ENCODE measurements at regions of chr17 and their contacts with region 1.

Region 1: GRCh38 chr17:50087246-50087911 is 7.8 kb upstream of the PDK2 start:
- DNase-seq: no peak
- H3K4me3 ChIP-seq: no peak overlapping the region
- H3K27me3 ChIP-seq: no peaks in the 10 kb centered on the region
- CTCF ChIP-seq: peak; percentile 98

Region 2: DNA sequence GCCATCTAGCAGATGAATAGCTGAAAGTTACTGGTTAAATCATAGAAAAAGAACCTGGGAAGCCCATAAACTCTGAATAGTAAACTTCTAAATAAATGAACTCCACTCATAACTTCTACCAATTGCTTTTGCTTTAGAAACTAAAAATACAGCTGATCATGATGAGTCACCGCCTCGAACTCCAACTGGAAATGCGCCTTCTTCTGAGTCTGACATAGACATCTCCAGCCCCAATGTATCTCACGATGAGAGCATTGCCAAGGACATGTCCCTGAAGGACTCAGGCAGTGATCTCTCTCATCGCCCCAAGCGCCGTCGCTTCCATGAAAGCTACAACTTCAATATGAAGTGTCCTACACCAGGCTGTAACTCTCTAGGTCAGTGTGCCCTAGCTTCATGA is 289.2 kb before region 1 on chr17:
- CTCF ChIA-PET with region 1: no interaction called
- POLR2A ChIA-PET with region 1: no interaction called
- DNase-seq: no peak
- H3K4me3 ChIP-seq: no peak overlapping the region
- H3K27me3 ChIP-seq: no peaks in the 10 kb centered on the region
- CTCF ChIP-seq: no peak

Region 3: GRCh38 chr17:49969134-49969759 is 118.1 kb before region 1 on chr17 and contains the start of gene DLX4:
- CTCF ChIA-PET with region 1: no interaction called
- POLR2A ChIA-PET with region 1: no interaction called
- DNase-seq: no peak
- H3K4me3 ChIP-seq: peak within 1 kb of the TSS; percentile 39
- H3K27me3 ChIP-seq: peaks cover 76% of the 10 kb centered on the region
- CTCF ChIP-seq: no peak
- polyA plus RNA-seq, gene DLX4: 0.18 and 0.29 TPM in 2 replicates

Region 4: DNA sequence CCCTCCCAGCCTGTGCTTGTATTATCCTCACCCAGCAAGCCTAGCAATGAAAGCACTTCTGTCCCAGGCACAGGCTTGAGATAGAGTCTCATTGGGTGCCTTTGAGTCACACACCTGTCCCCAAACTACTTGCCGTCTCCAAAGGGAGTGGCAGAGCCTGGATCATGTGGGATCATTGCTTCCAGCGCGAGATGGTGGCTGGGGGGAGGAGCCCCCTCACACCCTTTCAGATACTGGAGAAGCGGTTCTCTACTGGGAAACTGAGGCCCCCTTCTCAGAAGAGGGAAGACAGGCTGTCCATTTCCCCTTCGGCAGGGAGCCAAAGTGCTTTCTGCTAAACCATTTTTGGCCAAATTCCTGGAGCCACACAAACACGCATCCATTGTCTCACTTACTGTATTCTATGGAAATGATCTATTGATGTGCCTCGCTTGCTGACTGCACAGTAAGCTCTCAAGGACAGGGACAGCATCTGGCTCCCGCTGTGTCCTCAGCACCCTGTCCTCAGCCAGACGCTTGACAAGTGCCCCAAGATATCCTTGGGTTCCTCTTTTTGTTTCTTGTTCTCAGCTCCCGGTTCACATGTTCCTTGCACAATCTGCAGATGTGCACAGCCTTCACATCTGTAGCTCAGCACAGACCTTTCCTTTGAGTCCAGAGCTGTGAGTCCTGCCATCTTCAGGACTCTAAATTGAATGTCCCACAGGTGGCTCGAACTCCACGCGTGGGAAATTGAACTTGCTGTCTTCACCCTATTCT is 66.4 kb before region 1 on chr17:
- CTCF ChIA-PET with region 1: interaction called, 102 read pairs
- POLR2A ChIA-PET with region 1: no interaction called
- DNase-seq: no peak
- H3K4me3 ChIP-seq: no peak overlapping the region
- H3K27me3 ChIP-seq: no peaks in the 10 kb centered on the region
- CTCF ChIP-seq: no peak

Region 5: GRCh38 chr17:50033316-50033715 is 54.1 kb before region 1 on chr17:
- CTCF ChIA-PET with region 1: interaction called, 102 read pairs
- POLR2A ChIA-PET with region 1: no interaction called
- DNase-seq: no peak
- H3K4me3 ChIP-seq: no peak overlapping the region
- H3K27me3 ChIP-seq: no peaks in the 10 kb centered on the region
- CTCF ChIP-seq: no peak

Region 6: DNA sequence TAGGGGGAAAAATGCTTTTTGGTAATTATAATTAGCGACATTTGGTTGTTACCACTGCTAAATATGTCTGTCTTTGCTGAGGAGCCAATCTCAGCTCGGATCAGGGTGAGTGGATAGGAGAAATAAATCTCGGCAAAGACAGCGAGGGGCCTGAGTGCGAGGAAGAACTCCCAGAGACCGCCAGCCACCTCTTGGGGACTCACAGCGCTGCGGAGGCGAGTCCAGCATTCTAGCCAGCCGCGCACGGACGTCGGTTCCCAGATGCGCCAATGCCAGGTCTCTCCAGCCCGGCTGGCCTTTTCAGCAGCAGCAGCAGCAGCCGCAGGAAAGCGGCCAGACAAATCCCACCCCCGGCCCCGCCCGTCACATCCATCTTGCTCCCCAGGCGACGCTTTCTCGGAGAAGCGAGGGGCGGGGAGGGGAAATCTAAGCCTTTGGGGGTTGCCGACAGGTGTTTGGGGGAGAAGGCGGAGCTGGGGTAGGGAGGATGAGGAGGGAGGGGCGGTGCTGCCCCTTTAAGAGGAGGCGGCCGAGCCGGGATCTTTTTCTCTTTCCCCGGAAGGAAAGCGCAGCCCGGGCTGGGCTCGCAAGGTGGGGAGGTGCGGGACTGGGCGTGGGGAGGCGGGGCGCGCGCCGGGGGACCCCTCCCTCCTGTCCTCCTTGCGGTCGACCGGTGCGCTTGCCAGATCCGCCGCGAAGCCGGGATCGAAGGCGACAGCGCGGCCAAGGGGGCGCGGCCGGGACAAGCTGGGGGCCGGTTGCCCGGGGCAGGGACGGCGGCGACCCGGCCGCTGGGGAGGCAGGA is 31.8 kb before region 1 on chr17 and contains the start of gene ITGA3:
- CTCF ChIA-PET with region 1: interaction called, 46 read pairs
- POLR2A ChIA-PET with region 1: no interaction called
- DNase-seq: no peak
- H3K4me3 ChIP-seq: peak within 1 kb of the TSS; percentile 84
- H3K27me3 ChIP-seq: no peaks in the 10 kb centered on the region
- CTCF ChIP-seq: no peak
- polyA plus RNA-seq, gene ITGA3: 71.9 and 184 TPM in 2 replicates

Region 7: GRCh38 chr17:50070908-50071683 is 16.3 kb before region 1 on chr17:
- CTCF ChIA-PET with region 1: interaction called, 37 read pairs
- POLR2A ChIA-PET with region 1: no interaction called
- DNase-seq: no peak
- H3K4me3 ChIP-seq: no peak overlapping the region
- H3K27me3 ChIP-seq: no peaks in the 10 kb centered on the region
- CTCF ChIP-seq: no peak

Measured in BJ (cell line).